Psoas muscle (tissue), 8 donors: ENCODE measurements at regions of chr9 and their contacts with region 1.

Region 1: DNA sequence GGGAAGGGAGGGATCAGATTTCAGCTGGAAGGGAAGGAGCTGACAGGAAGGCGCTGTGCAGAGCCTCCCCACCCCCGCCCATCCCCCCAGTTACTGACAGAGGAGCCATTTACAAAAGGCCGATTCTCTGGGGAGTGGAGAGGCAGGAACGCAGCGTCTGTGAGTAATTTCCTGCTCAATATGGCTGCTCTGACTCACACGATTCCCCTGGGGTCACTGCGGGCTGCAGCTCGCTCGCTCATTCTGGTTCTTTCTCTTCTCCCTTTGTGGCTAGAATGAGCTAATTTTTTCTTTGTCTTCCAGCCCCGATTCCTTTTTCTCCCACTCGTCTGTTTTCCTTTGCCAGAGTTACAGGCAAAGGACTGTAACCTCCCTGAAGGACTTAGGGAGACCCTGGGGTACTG is 28.8 kb downstream of the PTPA start:
- DNase-seq: peak; percentile 95
- ATAC-seq: peak; percentile 83 to 85 (median 85)
- H3K4me3 ChIP-seq: peak overlapping the region; percentile 67
- H3K27ac ChIP-seq: peak overlapping the region; percentile 98
- H3K4me1 ChIP-seq: peaks cover 58% of the 10 kb centered on the region
- H3K27me3 ChIP-seq: no peaks in the 10 kb centered on the region
- CTCF ChIP-seq: no peak

Region 2: DNA sequence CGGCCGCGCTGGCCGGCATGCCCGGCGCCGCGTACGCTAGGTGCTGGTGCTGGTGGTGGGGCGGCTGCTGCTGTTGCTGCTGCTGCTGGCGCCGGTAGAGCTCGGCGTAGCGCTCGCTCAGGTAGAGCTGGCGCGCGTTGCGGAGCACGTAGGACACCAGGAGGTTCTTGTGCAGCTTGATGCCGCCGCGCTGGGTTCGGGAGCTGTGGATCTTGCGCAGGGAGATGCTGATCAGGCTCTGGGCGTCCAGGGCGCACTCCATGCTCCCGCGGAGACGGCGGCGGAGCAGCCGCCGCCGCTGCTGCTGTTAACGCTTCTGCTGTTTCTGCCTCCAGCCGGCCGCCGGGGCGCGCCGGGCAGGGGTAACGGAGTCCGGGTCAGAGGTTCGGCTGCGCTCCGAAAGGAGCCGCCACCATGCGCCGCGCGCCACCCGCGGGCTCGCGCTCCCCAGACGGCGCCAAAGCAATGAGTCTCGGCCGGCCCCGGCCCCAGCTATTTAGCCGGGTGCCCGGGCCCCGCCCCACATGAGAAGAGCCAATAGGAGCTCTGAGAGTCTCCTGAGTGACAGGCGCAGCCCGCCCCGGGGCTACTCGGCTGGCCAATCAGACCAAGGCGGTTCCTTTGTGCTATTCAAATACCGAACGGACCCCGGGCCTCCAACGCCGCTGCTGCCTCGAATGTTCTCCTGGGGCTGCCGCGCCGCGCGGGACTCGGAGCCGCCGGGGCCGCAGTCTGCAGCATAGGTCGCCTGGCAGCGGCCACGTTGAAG is 38.0 kb after region 1 on chr9 and contains the start of gene IER5L:
- intact Hi-C with region 1: loop called in 1 of 2 experiments (anchors 2 kb)
- DNase-seq: peak; percentile 96 to 97
- ATAC-seq: peak; percentile 89 to 90 (median 90)
- H3K4me3 ChIP-seq: peak within 1 kb of the TSS; percentile 86
- H3K27ac ChIP-seq: peak within 1 kb of the TSS; percentile 89
- H3K4me1 ChIP-seq: peaks cover 17% of the 10 kb centered on the region
- H3K27me3 ChIP-seq: no peaks in the 10 kb centered on the region
- CTCF ChIP-seq: no peak
- total RNA-seq, gene IER5L: 1.7 to 4.5 (median 3.4) TPM

Region 3: DNA sequence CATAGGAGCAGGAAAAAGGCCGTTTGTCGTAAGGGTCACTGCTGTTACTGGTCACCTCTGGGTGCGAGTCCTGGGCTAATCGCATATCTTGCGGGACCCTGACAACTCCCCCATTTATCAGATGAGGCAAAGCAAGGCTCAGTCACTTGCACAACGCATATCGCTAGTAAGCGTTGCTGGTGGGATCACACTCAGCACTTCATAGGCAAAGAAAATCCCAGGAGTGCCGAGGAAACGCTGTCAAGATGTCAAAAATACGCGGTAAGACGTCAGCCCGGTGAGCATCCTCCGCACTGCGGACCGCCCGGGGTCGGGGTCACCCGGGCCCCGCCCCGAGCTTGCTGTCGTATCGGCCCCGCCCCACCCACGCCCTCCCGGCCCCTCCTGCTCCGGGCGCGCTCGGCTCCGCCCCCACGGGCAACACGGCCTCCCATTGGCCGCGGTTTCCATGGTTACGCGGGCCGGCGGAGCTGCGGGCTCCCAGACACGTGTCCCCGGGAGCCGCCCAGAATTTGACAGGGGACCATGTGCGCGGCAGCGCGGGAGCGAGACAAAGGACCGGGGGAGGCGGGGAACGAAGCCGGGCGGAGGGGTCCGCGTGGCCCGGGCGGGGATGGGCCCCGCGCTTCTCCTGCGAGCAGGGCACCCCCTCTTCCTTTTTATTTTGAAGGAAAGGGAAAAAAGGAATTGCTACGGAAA is 118.3 kb after region 1 on chr9:
- intact Hi-C with region 1: loop called in 1 of 2 experiments (anchors 5 kb)
- DNase-seq: peak; percentile 94 to 96
- ATAC-seq: peak; percentile 75 to 94 (median 88)
- H3K4me3 ChIP-seq: peak overlapping the region; percentile 39
- H3K27ac ChIP-seq: peak overlapping the region; percentile 46
- H3K4me1 ChIP-seq: peaks cover 18% of the 10 kb centered on the region
- H3K27me3 ChIP-seq: peaks cover 0 to 23% (median 4%) of the 10 kb centered on the region in 3 donors
- CTCF ChIP-seq: no peak

Region 4: DNA sequence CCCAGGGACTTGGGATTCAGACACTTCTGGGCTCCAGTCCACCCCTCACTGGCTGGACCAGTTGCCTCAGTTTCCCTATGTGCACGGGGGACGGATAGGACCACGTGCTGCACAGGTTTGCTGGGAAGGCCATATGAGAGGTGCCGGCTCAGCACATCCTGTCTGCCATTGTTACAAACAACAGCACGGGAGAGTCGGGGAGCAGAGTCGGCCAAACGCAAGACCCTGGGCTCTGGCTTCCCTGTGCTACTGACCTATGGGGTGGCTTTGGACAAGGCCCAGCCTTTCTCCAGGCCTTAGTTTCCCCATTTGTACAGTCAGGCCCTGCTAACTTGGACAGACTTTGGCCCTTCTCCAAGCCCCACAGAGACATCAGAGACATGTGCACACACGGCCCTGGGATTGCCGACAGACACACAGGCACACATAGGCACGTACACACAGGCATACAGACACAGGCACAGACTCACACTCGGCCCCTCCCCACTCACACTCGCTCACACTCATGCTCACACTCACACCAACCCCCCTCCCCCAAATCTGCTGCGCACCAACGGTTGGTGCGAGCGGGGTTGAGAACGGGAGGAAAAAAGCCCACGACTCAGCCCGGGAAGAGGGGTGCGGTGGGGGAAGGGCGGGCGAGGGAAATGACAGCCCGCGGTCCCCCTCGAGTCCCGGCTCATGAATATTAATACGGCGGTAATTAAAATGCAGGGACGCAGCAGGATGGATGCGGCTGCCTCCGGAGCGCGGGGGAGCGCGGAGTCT is 347.8 kb after region 1 on chr9:
- intact Hi-C with region 1: loop called (anchors 2 to 10 kb)
- DNase-seq: peak in 1 of 2 donors; percentile 70
- ATAC-seq: peak; percentile 6 to 27 (median 19)
- H3K4me3 ChIP-seq: peak overlapping the region; percentile 70
- H3K27ac ChIP-seq: peak overlapping the region; percentile 95
- H3K4me1 ChIP-seq: peaks cover 45% of the 10 kb centered on the region
- H3K27me3 ChIP-seq: no peaks in the 10 kb centered on the region
- CTCF ChIP-seq: no peak

Region 5: GRCh38 chr9:129495534-129496325 is 355.7 kb after region 1 on chr9:
- intact Hi-C with region 1: loop called in 1 of 2 experiments (anchors 10 kb)
- DNase-seq: peak; percentile 94 to 97
- ATAC-seq: peak; percentile 82 to 90 (median 84)
- H3K4me3 ChIP-seq: peak overlapping the region; percentile 81
- H3K27ac ChIP-seq: peak overlapping the region; percentile 92
- H3K4me1 ChIP-seq: peaks cover 33% of the 10 kb centered on the region
- H3K27me3 ChIP-seq: no peaks in the 10 kb centered on the region
- CTCF ChIP-seq: no peak

Region 6: DNA sequence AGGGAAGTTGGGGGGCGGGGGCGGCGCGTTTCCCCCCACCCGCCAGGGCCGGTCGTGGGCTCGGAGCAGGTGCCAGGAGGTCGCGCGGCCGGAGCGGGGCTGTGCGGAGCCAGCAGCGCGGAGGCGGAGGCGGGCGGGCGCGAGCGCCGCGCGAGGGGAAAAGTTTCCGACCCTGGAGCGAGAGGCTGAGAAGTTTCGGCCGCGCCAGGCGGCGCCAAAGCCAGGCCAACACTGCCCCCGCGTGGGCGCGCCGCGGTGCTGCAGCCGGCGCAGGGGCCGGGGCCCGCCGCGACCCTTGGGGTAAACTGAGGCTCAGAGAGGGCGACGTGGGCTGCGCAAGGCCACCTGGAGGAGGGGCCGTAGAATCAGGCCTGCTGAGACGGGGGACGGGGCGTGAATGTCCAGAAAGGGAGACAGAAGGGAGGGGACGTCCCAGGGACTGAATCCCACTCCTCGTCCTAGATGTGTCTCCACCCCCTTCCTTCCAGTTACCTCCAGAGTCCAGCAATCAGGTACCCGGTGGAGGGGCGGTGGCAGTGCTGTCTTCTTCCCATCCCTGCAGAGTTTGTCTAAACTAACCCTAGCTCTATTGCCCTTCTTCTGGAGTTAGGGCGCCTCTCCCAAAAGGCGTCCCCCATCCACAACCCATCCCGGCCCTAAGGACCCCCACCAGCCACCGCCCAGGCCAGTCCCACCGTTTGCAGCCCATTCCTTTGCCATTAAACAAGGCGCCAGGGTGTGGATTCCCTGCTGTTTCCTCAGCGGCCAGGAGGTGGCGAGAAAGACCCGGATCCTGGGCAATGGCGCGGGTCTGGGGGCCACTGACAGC is 470.7 kb after region 1 on chr9:
- intact Hi-C with region 1: loop called (anchors 2 kb)
- DNase-seq: peak; percentile 78 to 87
- ATAC-seq: peak; percentile 71 to 86 (median 81)
- H3K4me3 ChIP-seq: peak overlapping the region; percentile 73
- H3K27ac ChIP-seq: peak overlapping the region; percentile 74
- H3K4me1 ChIP-seq: peaks cover 18% of the 10 kb centered on the region
- H3K27me3 ChIP-seq: no peaks in the 10 kb centered on the region
- CTCF ChIP-seq: peak; percentile 96

Region 7: DNA sequence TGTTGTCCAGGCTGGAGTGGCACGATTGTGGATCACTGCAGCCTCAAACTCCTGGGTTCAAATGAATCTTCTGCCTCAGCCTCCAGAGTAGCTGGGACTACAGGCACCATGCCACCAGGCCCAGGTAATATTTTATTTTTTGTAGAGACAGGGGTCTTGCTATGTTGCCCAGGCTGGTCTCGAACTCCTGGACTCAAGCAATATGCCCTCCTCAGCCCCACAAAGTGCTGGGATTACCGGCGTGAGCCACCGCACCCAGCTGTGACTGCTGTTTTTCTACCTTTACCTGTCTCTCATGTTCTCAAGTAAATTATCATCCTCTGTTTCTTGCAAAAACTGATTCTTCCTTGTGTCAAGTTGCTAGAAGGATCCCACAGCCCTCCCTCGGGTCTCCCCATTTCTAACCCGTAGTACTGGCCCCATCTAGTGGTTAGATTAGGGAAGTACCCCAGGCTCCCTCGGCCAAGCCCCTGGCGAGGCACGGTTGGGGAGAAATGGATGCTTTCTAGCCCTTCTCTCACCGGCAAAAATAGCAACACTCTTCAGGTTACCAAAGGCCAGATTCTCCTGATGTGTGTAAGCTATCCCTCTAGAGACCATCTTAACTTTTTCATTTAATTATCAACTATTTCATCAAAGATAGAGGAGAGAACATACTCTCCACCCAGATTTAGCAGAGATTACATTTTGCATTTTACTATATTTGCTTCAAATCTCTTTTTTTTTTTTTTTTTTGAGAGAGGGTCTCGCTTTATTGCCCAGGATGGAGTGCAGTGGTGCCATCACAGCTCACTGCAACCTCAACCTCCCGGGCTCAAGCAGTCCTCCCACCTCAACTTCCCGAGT is 643.7 kb after region 1 on chr9:
- intact Hi-C with region 1: loop called in 1 of 2 experiments (anchors 10 kb)
- DNase-seq: peak; percentile 44 to 68
- ATAC-seq: peak; percentile 80 to 93 (median 90)
- H3K4me3 ChIP-seq: no peak overlapping the region
- H3K27ac ChIP-seq: no peak overlapping the region
- H3K4me1 ChIP-seq: no peaks in the 10 kb centered on the region
- H3K27me3 ChIP-seq: peaks cover 0 to 6% (median 0%) of the 10 kb centered on the region in 3 donors
- CTCF ChIP-seq: peak; percentile 86